ENCODE measurements at regions of chr2 and their contacts with region 1.

Region 1: DNA sequence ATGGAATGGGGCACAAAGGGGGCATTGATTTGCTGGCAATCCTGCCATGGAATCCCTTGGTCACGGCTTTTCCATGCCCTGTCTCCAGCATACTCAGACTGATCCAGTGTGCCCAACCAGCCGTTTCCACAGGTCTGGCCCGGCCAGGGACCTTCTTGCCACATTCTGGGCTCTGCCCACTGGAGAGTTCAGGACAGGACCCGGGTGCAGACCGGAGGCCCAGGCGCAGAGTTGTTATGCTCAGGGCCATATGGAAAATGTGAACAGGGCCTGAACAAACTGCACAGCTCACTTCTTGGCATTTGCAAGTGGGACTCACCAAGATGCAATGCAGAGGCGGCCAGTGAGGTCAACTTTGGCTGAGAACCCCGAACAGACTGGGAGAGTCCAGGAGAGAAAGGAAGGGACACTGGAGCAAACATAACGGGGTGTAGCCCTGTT is 15.6 kb upstream of the ASAP2 start:
- DNase-seq: peak; percentile 95
- ATAC-seq: peak; percentile 93
- H3K4me3 ChIP-seq: no peak overlapping the region
- H3K27ac ChIP-seq: peak overlapping the region; percentile 67; the same call in 1 of the 2 replicates
- H3K4me1 ChIP-seq: peaks cover 14% of the 10 kb centered on the region
- H3K27me3 ChIP-seq: no peaks in the 10 kb centered on the region
- CTCF ChIP-seq: no peak
- POLR2A ChIP-seq: no peak
- RAD21 ChIP-seq: peak; percentile 12; the same call in 1 of the 2 replicates

Region 2: GRCh38 chr2:9212661-9213411 is 21.8 kb after region 1 on chr2:
- CTCF ChIA-PET with region 1: no interaction called
- POLR2A ChIA-PET with region 1: no interaction called
- dilution Hi-C with region 1: no loop called
- in situ Hi-C with region 1: no loop called
- intact Hi-C with region 1: no loop called
- DNase-seq: no peak
- ATAC-seq: no peak; the same call in 1 of the 2 replicates
- H3K4me3 ChIP-seq: no peak overlapping the region
- H3K27ac ChIP-seq: no peak overlapping the region
- H3K4me1 ChIP-seq: peaks cover 20% of the 10 kb centered on the region
- H3K27me3 ChIP-seq: no peaks in the 10 kb centered on the region
- CTCF ChIP-seq: no peak
- POLR2A ChIP-seq: no peak
- RAD21 ChIP-seq: no peak

Region 3: GRCh38 chr2:9297807-9298206 is 106.7 kb after region 1 on chr2:
- CTCF ChIA-PET with region 1: no interaction called
- POLR2A ChIA-PET with region 1: interaction called, 16 read pairs
- dilution Hi-C with region 1: no loop called
- in situ Hi-C with region 1: no loop called
- intact Hi-C with region 1: no loop called
- DNase-seq: no peak
- ATAC-seq: no peak
- H3K4me3 ChIP-seq: no peak overlapping the region
- H3K27ac ChIP-seq: peak overlapping the region; percentile 44; the same call in 1 of the 2 replicates
- H3K4me1 ChIP-seq: no peaks in the 10 kb centered on the region; the same call in 1 of the 2 replicates
- H3K27me3 ChIP-seq: no peaks in the 10 kb centered on the region
- CTCF ChIP-seq: no peak
- POLR2A ChIP-seq: no peak
- RAD21 ChIP-seq: no peak